ENCODE measurements at regions of chr6 and their contacts with region 1.

Region 1: GRCh38 chr6:157034436-157035230 is 257.5 kb downstream of the ARID1B start:
- DNase-seq: no peak
- H3K4me3 Mint-ChIP-seq: peak overlapping the region; percentile 41
- H3K27ac Mint-ChIP-seq: peak overlapping the region; percentile 63
- H3K4me1 Mint-ChIP-seq: peaks cover 26% of the 10 kb centered on the region
- H3K27me3 Mint-ChIP-seq: no peaks in the 10 kb centered on the region

Region 2: DNA sequence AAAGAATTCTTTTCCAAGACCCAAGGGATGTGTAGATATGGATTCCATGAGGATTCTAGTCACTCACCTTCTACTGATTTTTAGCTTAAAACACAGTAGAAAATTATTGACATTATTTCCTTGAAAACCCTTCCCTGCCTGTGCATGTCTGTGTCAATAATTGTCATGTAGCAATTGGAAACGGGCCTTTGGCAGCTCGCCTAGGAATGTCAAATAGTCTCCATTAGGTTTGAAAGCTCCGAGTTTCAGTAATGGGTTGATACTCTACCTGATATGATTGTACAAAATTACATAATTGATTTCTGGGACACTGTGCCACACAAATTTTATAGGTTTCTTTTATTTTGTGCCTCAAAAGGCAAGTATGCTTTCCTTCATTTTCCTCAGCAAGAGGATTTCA is 772.6 kb before region 1 on chr6:
- CTCF ChIA-PET with region 1: no interaction called
- intact Hi-C with region 1: no loop called
- DNase-seq: no peak
- H3K4me3 Mint-ChIP-seq: no peak overlapping the region
- H3K27ac Mint-ChIP-seq: no peak overlapping the region
- H3K4me1 Mint-ChIP-seq: peaks cover under 1% of the 10 kb centered on the region
- H3K27me3 Mint-ChIP-seq: no peaks in the 10 kb centered on the region

Region 3: GRCh38 chr6:157045831-157046454 is 11.3 kb after region 1 on chr6:
- CTCF ChIA-PET with region 1: interaction called, 21 read pairs
- intact Hi-C with region 1: no loop called
- DNase-seq: no peak
- H3K4me3 Mint-ChIP-seq: no peak overlapping the region
- H3K27ac Mint-ChIP-seq: no peak overlapping the region
- H3K4me1 Mint-ChIP-seq: peaks cover 11% of the 10 kb centered on the region
- H3K27me3 Mint-ChIP-seq: no peaks in the 10 kb centered on the region

Region 4: GRCh38 chr6:157054531-157054979 is 19.9 kb after region 1 on chr6:
- CTCF ChIA-PET with region 1: interaction called, 7 read pairs
- intact Hi-C with region 1: loop called (anchors 1 kb)
- DNase-seq: peak; percentile 67
- H3K4me3 Mint-ChIP-seq: peak overlapping the region; percentile 29
- H3K27ac Mint-ChIP-seq: peak overlapping the region; percentile 94
- H3K4me1 Mint-ChIP-seq: peaks cover 43% of the 10 kb centered on the region
- H3K27me3 Mint-ChIP-seq: no peaks in the 10 kb centered on the region

Region 5: GRCh38 chr6:157184202-157185020 is 149.8 kb after region 1 on chr6:
- CTCF ChIA-PET with region 1: interaction called, 7 read pairs
- intact Hi-C with region 1: loop called (anchors 1 kb)
- DNase-seq: peak; percentile 69
- H3K4me3 Mint-ChIP-seq: no peak overlapping the region
- H3K27ac Mint-ChIP-seq: no peak overlapping the region
- H3K4me1 Mint-ChIP-seq: peaks cover 10% of the 10 kb centered on the region
- H3K27me3 Mint-ChIP-seq: no peaks in the 10 kb centered on the region